Psoas muscle (tissue), 8 donors: ENCODE measurements at regions of chr16 and their contacts with region 1.

Region 1: GRCh38 chr16:74309789-74310781 is 13.5 kb downstream of the PSMD7 start:
- DNase-seq: no peak
- ATAC-seq: peak in 2 of 4 donors; percentile 48 to 66
- H3K4me3 ChIP-seq: no peak overlapping the region
- H3K27ac ChIP-seq: no peak overlapping the region
- H3K4me1 ChIP-seq: no peaks in the 10 kb centered on the region
- H3K27me3 ChIP-seq: no peaks in the 10 kb centered on the region
- CTCF ChIP-seq: peak; percentile 72

Region 2: GRCh38 chr16:74431516-74431915 is 121.4 kb after region 1 on chr16:
- intact Hi-C with region 1: loop called (anchors 5 to 10 kb)
- DNase-seq: no peak
- ATAC-seq: no peak
- H3K4me3 ChIP-seq: no peak overlapping the region
- H3K27ac ChIP-seq: no peak overlapping the region
- H3K4me1 ChIP-seq: no peaks in the 10 kb centered on the region
- H3K27me3 ChIP-seq: no peaks in the 10 kb centered on the region
- CTCF ChIP-seq: no peak

Region 3: GRCh38 chr16:74438492-74439041 is 128.5 kb after region 1 on chr16:
- intact Hi-C with region 1: loop called (anchors 5 to 10 kb)
- DNase-seq: no peak
- ATAC-seq: no peak
- H3K4me3 ChIP-seq: no peak overlapping the region
- H3K27ac ChIP-seq: no peak overlapping the region
- H3K4me1 ChIP-seq: no peaks in the 10 kb centered on the region
- H3K27me3 ChIP-seq: no peaks in the 10 kb centered on the region
- CTCF ChIP-seq: no peak